Caco-2 (cell line): ENCODE measurements at regions of chr20 and their contacts with region 1.

Region 1: GRCh38 chr20:48657475-48658470 is 170.0 kb downstream of the PREX1 start:
- DNase-seq: peak; percentile 85 to 89
- H3K4me3 ChIP-seq: no peak overlapping the region
- H3K4me3 Mint-ChIP-seq: no peak overlapping the region
- H3K27ac Mint-ChIP-seq: no peak overlapping the region
- H3K4me1 ChIP-seq: no peaks in the 10 kb centered on the region
- H3K4me1 Mint-ChIP-seq: peaks cover 6% of the 10 kb centered on the region
- H3K27me3 ChIP-seq: no peaks in the 10 kb centered on the region
- H3K27me3 Mint-ChIP-seq: no peaks in the 10 kb centered on the region
- CTCF ChIP-seq: peak; percentile 99 to 100

Region 2: GRCh38 chr20:48676795-48677460 is 19.2 kb after region 1 on chr20:
- CTCF ChIA-PET with region 1: interaction called, 10 read pairs
- POLR2A ChIA-PET with region 1: no interaction called
- intact Hi-C with region 1: no loop called
- DNase-seq: no peak
- H3K4me3 ChIP-seq: no peak overlapping the region
- H3K4me3 Mint-ChIP-seq: no peak overlapping the region
- H3K27ac Mint-ChIP-seq: no peak overlapping the region
- H3K4me1 ChIP-seq: peaks cover 13% of the 10 kb centered on the region
- H3K4me1 Mint-ChIP-seq: no peaks in the 10 kb centered on the region
- H3K27me3 ChIP-seq: 0 out of 2 replicates have a peak, but pooled peaks cover 1% of the 10 kb centered on the region
- H3K27me3 Mint-ChIP-seq: peaks cover 11% of the 10 kb centered on the region
- CTCF ChIP-seq: no peak

Region 3: GRCh38 chr20:48725226-48725991 is 67.6 kb after region 1 on chr20:
- CTCF ChIA-PET with region 1: interaction called, 13 read pairs
- POLR2A ChIA-PET with region 1: no interaction called
- intact Hi-C with region 1: loop called (anchors 5 kb)
- DNase-seq: peak; percentile 74 to 85
- H3K4me3 ChIP-seq: no peak overlapping the region
- H3K4me3 Mint-ChIP-seq: no peak overlapping the region
- H3K27ac Mint-ChIP-seq: peak overlapping the region; percentile 14
- H3K4me1 ChIP-seq: peaks cover 5% of the 10 kb centered on the region; the same call in 1 of the 2 replicates
- H3K4me1 Mint-ChIP-seq: peaks cover 8% of the 10 kb centered on the region
- H3K27me3 ChIP-seq: no peaks in the 10 kb centered on the region
- H3K27me3 Mint-ChIP-seq: no peaks in the 10 kb centered on the region
- CTCF ChIP-seq: no peak

Region 4: DNA sequence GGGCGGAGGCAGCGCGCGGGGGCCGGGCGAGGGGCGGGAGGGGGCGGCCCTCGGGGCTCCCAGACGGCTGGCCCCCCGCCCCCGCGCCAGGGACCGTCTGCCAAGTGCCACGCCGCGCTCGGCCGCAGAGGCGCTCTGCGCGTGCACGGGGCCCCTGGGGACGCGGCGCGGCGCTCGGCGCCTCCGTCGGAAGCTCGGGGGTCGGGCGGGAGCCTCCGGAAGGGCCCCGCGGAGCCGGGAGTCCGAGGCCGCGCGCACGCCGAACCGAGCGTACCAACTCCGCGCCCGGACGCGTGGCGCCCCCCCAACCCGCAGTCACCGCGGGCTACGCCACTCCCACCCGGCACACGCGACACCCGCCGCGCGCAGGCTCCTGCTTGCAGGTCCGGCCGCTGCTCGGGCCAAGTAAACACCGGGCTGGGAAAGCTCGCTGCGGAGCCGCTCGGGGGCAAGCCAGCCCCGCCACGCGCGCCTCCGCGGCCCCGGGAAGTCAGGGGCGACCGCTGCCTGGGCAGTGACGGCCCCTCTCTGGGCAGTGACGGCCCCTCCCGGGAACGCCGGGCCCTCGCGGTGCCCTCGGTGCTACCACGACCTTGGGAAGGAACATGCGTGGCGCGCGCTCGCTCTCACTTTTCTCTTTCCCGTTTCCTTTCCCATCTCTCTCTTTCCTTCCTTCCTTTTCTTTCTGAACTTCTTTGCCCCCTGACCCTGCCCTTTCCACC is 170.4 kb after region 1 on chr20:
- CTCF ChIA-PET with region 1: interaction called, 18 read pairs
- POLR2A ChIA-PET with region 1: no interaction called
- intact Hi-C with region 1: loop called (anchors 1 kb)
- DNase-seq: peak; percentile 86 to 96
- H3K4me3 ChIP-seq: peak overlapping the region; percentile 64
- H3K4me3 Mint-ChIP-seq: peak overlapping the region; percentile 77
- H3K27ac Mint-ChIP-seq: peak overlapping the region; percentile 10
- H3K4me1 ChIP-seq: peaks cover 19% of the 10 kb centered on the region
- H3K4me1 Mint-ChIP-seq: peaks cover 9% of the 10 kb centered on the region
- H3K27me3 ChIP-seq: 0 out of 2 replicates have a peak, but pooled peaks cover 4% of the 10 kb centered on the region
- H3K27me3 Mint-ChIP-seq: peaks cover 3% of the 10 kb centered on the region
- CTCF ChIP-seq: peak in 1 of 2 experiments; percentile 7

Region 5: DNA sequence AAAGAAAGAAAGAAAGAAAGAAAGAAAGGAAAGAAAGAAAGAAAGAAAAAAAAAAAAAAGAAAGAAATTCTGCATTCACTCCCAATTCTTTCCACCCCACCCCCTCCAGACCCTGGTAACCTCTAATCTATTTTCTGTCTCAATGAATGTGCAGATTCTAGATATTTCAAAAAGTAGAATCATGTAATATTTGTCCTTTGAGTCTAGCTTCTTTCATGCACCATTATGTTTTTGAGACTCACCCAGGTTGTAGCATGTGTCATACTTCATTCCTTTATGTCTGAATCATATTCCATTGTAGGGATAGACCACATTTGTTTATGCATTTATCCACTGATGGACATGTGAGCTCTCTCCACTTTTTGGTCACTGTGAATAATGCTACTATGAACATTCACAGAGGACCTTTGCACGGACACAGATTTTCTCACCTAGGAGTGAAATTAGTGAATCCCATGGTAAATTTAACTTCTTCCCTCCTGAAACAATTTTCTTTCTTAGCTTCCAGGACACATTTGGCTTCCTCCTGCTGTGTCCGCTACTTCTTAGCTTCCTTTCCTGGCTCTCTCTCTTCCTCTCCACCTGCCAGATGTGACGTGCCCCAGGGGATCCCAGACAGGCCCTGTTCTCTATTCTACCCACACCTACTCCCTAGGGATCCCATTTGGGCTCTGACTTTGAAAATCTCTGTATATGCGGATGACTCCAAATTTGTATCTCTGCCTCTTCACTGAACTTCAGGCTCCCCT is 239.6 kb after region 1 on chr20:
- CTCF ChIA-PET with region 1: interaction called, 31 read pairs
- POLR2A ChIA-PET with region 1: no interaction called
- intact Hi-C with region 1: no loop called
- DNase-seq: no peak
- H3K4me3 ChIP-seq: no peak overlapping the region
- H3K4me3 Mint-ChIP-seq: no peak overlapping the region
- H3K27ac Mint-ChIP-seq: no peak overlapping the region
- H3K4me1 ChIP-seq: 0 out of 2 replicates have a peak, but pooled peaks cover 4% of the 10 kb centered on the region
- H3K4me1 Mint-ChIP-seq: no peaks in the 10 kb centered on the region
- H3K27me3 ChIP-seq: peaks cover 2% of the 10 kb centered on the region
- H3K27me3 Mint-ChIP-seq: peaks cover 10% of the 10 kb centered on the region
- CTCF ChIP-seq: no peak

Region 6: DNA sequence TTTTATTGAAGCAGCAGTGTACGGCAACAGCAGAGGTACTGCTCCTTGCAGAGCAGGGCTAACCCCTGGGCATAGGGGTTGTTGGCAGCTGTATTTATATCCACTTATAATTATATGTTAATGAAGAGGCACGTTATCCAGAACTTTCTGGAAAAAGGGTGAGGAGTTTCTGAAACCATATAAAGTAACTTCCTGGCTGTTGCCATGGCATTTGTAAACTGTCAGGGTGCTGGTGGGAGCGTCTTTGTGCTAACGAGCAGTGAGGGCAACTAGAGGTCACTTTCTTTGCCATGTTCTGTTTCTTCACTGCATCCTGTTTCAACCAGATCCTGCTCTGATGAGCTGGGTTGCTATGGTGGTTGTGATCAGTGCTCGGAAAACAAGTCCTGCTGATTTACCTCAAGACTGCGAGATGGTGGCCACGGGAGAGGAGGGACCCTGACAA is 252.6 kb after region 1 on chr20:
- CTCF ChIA-PET with region 1: interaction called, 133 read pairs
- POLR2A ChIA-PET with region 1: no interaction called
- intact Hi-C with region 1: loop called (anchors 1 kb)
- DNase-seq: no peak
- H3K4me3 ChIP-seq: no peak overlapping the region
- H3K4me3 Mint-ChIP-seq: no peak overlapping the region
- H3K27ac Mint-ChIP-seq: no peak overlapping the region
- H3K4me1 ChIP-seq: peaks cover 4% of the 10 kb centered on the region; the same call in 1 of the 2 replicates
- H3K4me1 Mint-ChIP-seq: no peaks in the 10 kb centered on the region
- H3K27me3 ChIP-seq: no peaks in the 10 kb centered on the region
- H3K27me3 Mint-ChIP-seq: peaks cover 8% of the 10 kb centered on the region
- CTCF ChIP-seq: no peak